ENCODE measurements at regions of chr15 and their contacts with region 1.

Region 1: GRCh38 chr15:48703544-48703943 is 58.0 kb upstream of the FBN1 start:
- DNase-seq: no peak
- H3K4me3 ChIP-seq: no peak overlapping the region
- H3K27ac ChIP-seq: no peak overlapping the region
- H3K27me3 ChIP-seq: no peaks in the 10 kb centered on the region
- CTCF ChIP-seq: no peak

Region 2: GRCh38 chr15:48645558-48646330 is 57.8 kb before region 1 on chr15 and contains the start of gene FBN1:
- intact Hi-C with region 1: no loop called
- DNase-seq: peak in 9 of 10 donors; percentile 23 to 89 (median 80)
- H3K4me3 ChIP-seq: peak within 1 kb of the TSS; percentile 66 to 94 (median 84)
- H3K27ac ChIP-seq: peak within 1 kb of the TSS; percentile 80 to 98 (median 95)
- H3K27me3 ChIP-seq: no peaks in the 10 kb centered on the region
- CTCF ChIP-seq: peak in 2 of 56 donors; percentile 2 to 26
- total RNA-seq, gene FBN1: 18.2 to 42.8 (median 30.3) TPM

Region 3: DNA sequence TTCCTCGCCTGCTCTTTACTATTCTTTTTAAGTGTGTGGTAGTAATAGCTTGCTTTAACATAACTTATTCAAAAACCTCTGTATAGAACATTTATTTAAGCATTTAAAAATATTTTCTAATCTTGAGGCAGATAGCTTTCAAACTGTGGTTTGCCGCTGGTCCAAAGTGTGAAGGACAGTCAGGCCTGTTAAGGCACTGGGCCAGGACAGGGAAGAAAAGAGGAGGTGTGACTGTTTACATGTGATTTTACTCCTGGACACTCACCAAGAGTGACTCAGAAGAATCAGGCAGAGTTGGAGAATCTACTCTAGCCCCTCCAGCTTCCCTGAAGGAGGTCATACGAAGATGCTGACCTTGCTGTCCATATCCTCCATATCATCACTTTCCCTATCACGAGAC is 62.7 kb after region 1 on chr15:
- intact Hi-C with region 1: loop called in 1 of 2 experiments (anchors 10 kb)
- DNase-seq: no peak
- H3K4me3 ChIP-seq: no peak overlapping the region
- H3K27ac ChIP-seq: no peak overlapping the region
- H3K27me3 ChIP-seq: no peaks in the 10 kb centered on the region
- CTCF ChIP-seq: no peak